Panc1 (cell line): ENCODE measurements at regions of chr2 and their contacts with region 1.

Region 1: DNA sequence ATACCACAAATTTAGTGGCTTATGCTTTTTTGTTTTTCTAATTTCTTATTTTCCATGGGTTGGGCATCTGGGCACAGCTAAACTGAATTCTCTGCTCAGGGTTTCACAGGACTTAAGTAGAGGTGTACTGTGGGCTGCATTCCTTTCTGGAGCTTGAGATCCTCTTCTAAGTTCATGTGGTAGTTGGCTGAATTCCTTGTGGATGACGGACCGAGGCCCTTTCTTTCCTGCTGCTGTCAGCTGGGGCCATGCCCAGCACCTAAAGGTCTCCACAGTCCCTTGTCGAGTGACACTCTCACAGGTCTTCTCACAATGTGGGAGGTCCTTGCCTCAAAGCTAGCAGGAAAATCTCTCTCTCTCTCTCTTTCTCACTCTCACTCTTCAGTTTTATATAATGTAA is 433.5 kb upstream of the LRATD1 start:
- DNase-seq: no peak
- ATAC-seq: no peak
- H3K4me3 ChIP-seq: no peak overlapping the region
- H3K27ac ChIP-seq: no peak overlapping the region
- H3K4me1 ChIP-seq: no peaks in the 10 kb centered on the region
- H3K27me3 ChIP-seq: no peaks in the 10 kb centered on the region
- CTCF ChIP-seq: no peak

Region 2: GRCh38 chr2:13201924-13202323 is 997.1 kb before region 1 on chr2:
- CTCF ChIA-PET with region 1: no interaction called
- POLR2A ChIA-PET with region 1: interaction called, 11 read pairs
- in situ Hi-C with region 1: no loop called
- intact Hi-C with region 1: no loop called
- DNase-seq: no peak
- ATAC-seq: no peak
- H3K4me3 ChIP-seq: no peak overlapping the region
- H3K27ac ChIP-seq: no peak overlapping the region
- H3K4me1 ChIP-seq: no peaks in the 10 kb centered on the region
- H3K27me3 ChIP-seq: no peaks in the 10 kb centered on the region
- CTCF ChIP-seq: peak; percentile 43; the same call in 1 of the 2 replicates

Region 3: DNA sequence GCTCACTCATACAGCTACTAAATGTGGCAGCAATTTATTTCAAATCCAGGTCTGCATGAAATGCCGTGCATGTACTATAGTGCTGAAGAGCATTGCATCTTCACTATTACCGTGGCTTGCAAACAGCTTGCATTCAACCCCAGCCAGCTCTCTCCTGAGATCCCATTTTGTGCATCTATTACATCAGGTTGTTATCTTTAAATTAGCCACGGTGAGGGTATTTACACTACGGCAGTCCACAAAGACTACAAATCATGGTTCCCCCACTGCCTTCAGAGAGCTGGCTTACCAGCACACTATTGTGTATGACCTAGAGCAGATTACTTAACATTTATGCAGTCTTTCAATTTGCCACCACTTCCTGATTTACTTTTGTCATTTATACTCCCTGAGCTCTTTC is 187.8 kb before region 1 on chr2:
- CTCF ChIA-PET with region 1: no interaction called
- POLR2A ChIA-PET with region 1: no interaction called
- in situ Hi-C with region 1: no loop called
- intact Hi-C with region 1: no loop called
- DNase-seq: no peak
- ATAC-seq: no peak
- H3K4me3 ChIP-seq: no peak overlapping the region
- H3K27ac ChIP-seq: no peak overlapping the region
- H3K4me1 ChIP-seq: no peaks in the 10 kb centered on the region
- H3K27me3 ChIP-seq: no peaks in the 10 kb centered on the region
- CTCF ChIP-seq: no peak

Region 4: GRCh38 chr2:14396533-14397083 is 197.6 kb after region 1 on chr2:
- CTCF ChIA-PET with region 1: no interaction called
- POLR2A ChIA-PET with region 1: no interaction called
- in situ Hi-C with region 1: no loop called
- intact Hi-C with region 1: no loop called
- DNase-seq: no peak
- ATAC-seq: no peak
- H3K4me3 ChIP-seq: no peak overlapping the region
- H3K27ac ChIP-seq: no peak overlapping the region
- H3K4me1 ChIP-seq: no peaks in the 10 kb centered on the region
- H3K27me3 ChIP-seq: no peaks in the 10 kb centered on the region
- CTCF ChIP-seq: no peak